ENCODE measurements at regions of chr18 and their contacts with region 1.

Region 1: GRCh38 chr18:62714671-62715435 is 488 bp upstream of the PHLPP1 start:
- DNase-seq: peak; percentile 82 to 98 (median 90)
- ATAC-seq: peak; percentile 71
- H3K4me3 ChIP-seq: peak overlapping the region; percentile 63
- H3K4me3 Mint-ChIP-seq: peak overlapping the region; percentile 94
- H3K27ac ChIP-seq: peak overlapping the region; percentile 71 to 84
- H3K27ac Mint-ChIP-seq: peak overlapping the region; percentile 98
- H3K4me1 ChIP-seq: peaks cover 15% of the 10 kb centered on the region
- H3K4me1 Mint-ChIP-seq: peaks cover 30% of the 10 kb centered on the region
- H3K27me3 ChIP-seq: no peaks in the 10 kb centered on the region
- H3K27me3 Mint-ChIP-seq: no peaks in the 10 kb centered on the region
- CTCF ChIP-seq: peak; percentile 73

Region 2: GRCh38 chr18:62186774-62187542 is 527.9 kb before region 1 on chr18 and contains the starts of genes PIGN and RELCH:
- CTCF ChIA-PET with region 1: no interaction called
- POLR2A ChIA-PET with region 1: interaction called, 7 read pairs
- intact Hi-C with region 1: loop called (anchors 5 kb)
- DNase-seq: peak; percentile 87 to 99 (median 91)
- ATAC-seq: peak; percentile 89
- H3K4me3 ChIP-seq: peak within 1 kb of the TSS; percentile 76
- H3K4me3 Mint-ChIP-seq: peak within 1 kb of the TSS; percentile 97
- H3K27ac ChIP-seq: peak within 1 kb of the TSS; percentile 66 to 78
- H3K27ac Mint-ChIP-seq: peak within 1 kb of the TSS; percentile 95
- H3K4me1 ChIP-seq: peaks cover 29% of the 10 kb centered on the region
- H3K4me1 Mint-ChIP-seq: peaks cover 72% of the 10 kb centered on the region
- H3K27me3 ChIP-seq: no peaks in the 10 kb centered on the region
- H3K27me3 Mint-ChIP-seq: no peaks in the 10 kb centered on the region
- CTCF ChIP-seq: no peak
- total RNA-seq, gene PIGN: 9.6 to 11.7 TPM
- total RNA-seq, gene RELCH: 39.6 to 44.3 TPM

Region 3: GRCh38 chr18:62522504-62523254 is 192.2 kb before region 1 on chr18 and contains the start of gene ZCCHC2:
- CTCF ChIA-PET with region 1: interaction called, 3 read pairs
- POLR2A ChIA-PET with region 1: interaction called, 27 read pairs
- intact Hi-C with region 1: loop called (anchors 2 to 5 kb)
- DNase-seq: peak; percentile 95 to 100 (median 98)
- ATAC-seq: peak; percentile 74
- H3K4me3 ChIP-seq: peak within 1 kb of the TSS; percentile 92
- H3K4me3 Mint-ChIP-seq: peak within 1 kb of the TSS; percentile 98
- H3K27ac ChIP-seq: peak within 1 kb of the TSS; percentile 62 to 75
- H3K27ac Mint-ChIP-seq: peak within 1 kb of the TSS; percentile 93
- H3K4me1 ChIP-seq: peaks cover 25% of the 10 kb centered on the region
- H3K4me1 Mint-ChIP-seq: peaks cover 40% of the 10 kb centered on the region
- H3K27me3 ChIP-seq: no peaks in the 10 kb centered on the region
- H3K27me3 Mint-ChIP-seq: no peaks in the 10 kb centered on the region
- CTCF ChIP-seq: no peak
- total RNA-seq, gene ZCCHC2: 85.0 to 85.4 TPM

Region 4: DNA sequence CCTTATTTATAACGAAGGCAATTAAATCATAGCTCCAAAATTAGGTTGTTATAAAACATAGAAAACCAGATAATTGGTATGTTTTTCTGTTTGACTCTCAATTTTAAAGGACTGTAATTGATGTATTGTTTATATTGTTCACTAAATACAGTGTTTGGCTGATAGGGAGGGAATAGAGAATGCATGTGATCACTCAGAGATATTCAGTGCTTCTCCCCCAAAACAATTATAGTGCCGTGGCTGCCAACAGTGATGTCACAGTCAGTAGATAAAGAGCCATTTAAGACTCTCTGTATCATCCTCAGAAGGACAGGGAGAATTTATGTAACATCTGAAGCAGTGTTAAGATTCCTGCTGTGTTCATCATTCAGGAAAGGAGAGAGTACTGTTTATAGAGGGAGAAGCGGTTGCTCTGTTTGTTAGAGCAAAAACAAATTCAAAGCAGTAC is 70.1 kb after region 1 on chr18:
- CTCF ChIA-PET with region 1: interaction called, 3 read pairs
- POLR2A ChIA-PET with region 1: no interaction called
- intact Hi-C with region 1: loop called in 1 of 2 experiments (anchors 5 kb)
- DNase-seq: no peak
- ATAC-seq: no peak
- H3K4me3 ChIP-seq: no peak overlapping the region
- H3K4me3 Mint-ChIP-seq: no peak overlapping the region
- H3K27ac ChIP-seq: no peak overlapping the region
- H3K27ac Mint-ChIP-seq: no peak overlapping the region
- H3K4me1 ChIP-seq: no peaks in the 10 kb centered on the region
- H3K4me1 Mint-ChIP-seq: peaks cover 46% of the 10 kb centered on the region
- H3K27me3 ChIP-seq: no peaks in the 10 kb centered on the region
- H3K27me3 Mint-ChIP-seq: no peaks in the 10 kb centered on the region
- CTCF ChIP-seq: no peak

Region 5: GRCh38 chr18:62863579-62864001 is 148.7 kb after region 1 on chr18:
- CTCF ChIA-PET with region 1: no interaction called
- POLR2A ChIA-PET with region 1: no interaction called
- intact Hi-C with region 1: loop called in 1 of 2 experiments (anchors 10 kb)
- DNase-seq: no peak
- ATAC-seq: no peak
- H3K4me3 ChIP-seq: no peak overlapping the region
- H3K4me3 Mint-ChIP-seq: no peak overlapping the region
- H3K27ac ChIP-seq: no peak overlapping the region
- H3K27ac Mint-ChIP-seq: no peak overlapping the region
- H3K4me1 ChIP-seq: no peaks in the 10 kb centered on the region
- H3K4me1 Mint-ChIP-seq: no peaks in the 10 kb centered on the region
- H3K27me3 ChIP-seq: no peaks in the 10 kb centered on the region
- H3K27me3 Mint-ChIP-seq: no peaks in the 10 kb centered on the region
- CTCF ChIP-seq: no peak

Region 6: GRCh38 chr18:62982600-62983251 is 267.9 kb after region 1 on chr18:
- CTCF ChIA-PET with region 1: interaction called, 17 read pairs
- POLR2A ChIA-PET with region 1: interaction called, 27 read pairs
- intact Hi-C with region 1: loop called (anchors 1 kb)
- DNase-seq: peak in 13 of 14 experiments; percentile 27 to 76 (median 37)
- ATAC-seq: peak; percentile 74
- H3K4me3 ChIP-seq: peak overlapping the region; percentile 20
- H3K4me3 Mint-ChIP-seq: peak overlapping the region; percentile 48
- H3K27ac ChIP-seq: no peak overlapping the region
- H3K27ac Mint-ChIP-seq: no peak overlapping the region
- H3K4me1 ChIP-seq: peaks cover 6% of the 10 kb centered on the region
- H3K4me1 Mint-ChIP-seq: no peaks in the 10 kb centered on the region
- H3K27me3 ChIP-seq: no peaks in the 10 kb centered on the region
- H3K27me3 Mint-ChIP-seq: no peaks in the 10 kb centered on the region
- CTCF ChIP-seq: peak; percentile 75

Region 7: DNA sequence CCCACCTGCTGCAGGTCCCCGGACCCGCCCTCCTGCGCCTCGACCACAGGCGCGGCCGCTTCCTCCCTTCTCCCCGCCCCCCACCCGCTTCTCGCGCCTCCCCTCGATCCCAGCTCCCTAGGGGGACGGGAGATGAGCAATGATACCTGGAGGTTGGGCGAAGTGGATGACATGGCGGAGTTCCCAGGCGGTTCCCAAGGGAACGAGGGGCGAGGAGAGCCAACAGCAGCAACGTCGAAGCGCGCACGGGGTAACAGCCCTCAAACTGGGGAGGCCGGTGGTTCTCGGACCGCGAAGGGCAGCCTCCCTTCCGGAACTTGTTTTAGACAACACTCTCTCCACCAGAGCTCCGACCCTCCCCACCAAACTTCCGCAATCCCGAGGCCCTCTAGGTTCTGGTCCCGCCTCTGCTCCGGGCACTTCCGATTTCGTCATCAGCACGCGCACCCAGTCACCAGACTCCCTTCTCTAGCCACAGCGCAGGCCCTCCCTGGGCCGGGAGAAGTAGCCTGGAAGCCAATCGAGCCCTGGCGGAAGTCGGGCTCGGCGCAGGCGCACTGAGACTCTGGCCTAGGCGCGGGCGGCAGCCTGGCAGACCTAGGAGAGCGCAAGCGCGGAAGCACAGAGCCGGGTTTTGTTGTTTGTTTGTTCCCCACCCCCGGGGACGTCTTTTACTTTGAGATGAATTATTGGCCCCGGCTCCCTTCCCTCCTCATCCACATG is 707.4 kb after region 1 on chr18 and contains the start of gene VPS4B:
- CTCF ChIA-PET with region 1: no interaction called
- POLR2A ChIA-PET with region 1: interaction called, 6 read pairs
- intact Hi-C with region 1: loop called (anchors 1 to 5 kb)
- DNase-seq: peak; percentile 98 to 100 (median 99)
- ATAC-seq: peak; percentile 92
- H3K4me3 ChIP-seq: peak within 1 kb of the TSS; percentile 83
- H3K4me3 Mint-ChIP-seq: peak within 1 kb of the TSS; percentile 96
- H3K27ac ChIP-seq: peak within 1 kb of the TSS; percentile 84 to 93
- H3K27ac Mint-ChIP-seq: peak within 1 kb of the TSS; percentile 95
- H3K4me1 ChIP-seq: peaks cover 42% of the 10 kb centered on the region
- H3K4me1 Mint-ChIP-seq: peaks cover 25% of the 10 kb centered on the region
- H3K27me3 ChIP-seq: no peaks in the 10 kb centered on the region
- H3K27me3 Mint-ChIP-seq: peaks cover 8% of the 10 kb centered on the region
- CTCF ChIP-seq: no peak
- total RNA-seq, gene VPS4B: 46.0 to 50.8 TPM

Measured in CD4-positive, alpha-beta T cell (primary cell).